ENCODE measurements at regions of chr19 and their contacts with region 1.

Region 1: GRCh38 chr19:2096480-2097329 is at the start of gene IZUMO4:
- DNase-seq: peak; percentile 96
- ATAC-seq: peak; percentile 95
- H3K4me3 ChIP-seq: peak within 1 kb of the TSS; percentile 70
- H3K27ac ChIP-seq: peak within 1 kb of the TSS; percentile 89
- H3K4me1 ChIP-seq: peaks cover 6% of the 10 kb centered on the region
- H3K27me3 ChIP-seq: no peaks in the 10 kb centered on the region
- CTCF ChIP-seq: peak; percentile 43
- POLR2A ChIP-seq: no peak
- RAD21 ChIP-seq: peak; percentile 20; the same call in 1 of the 2 replicates
- total RNA-seq, gene IZUMO4: 0.56 and 0.72 TPM in 2 replicates

Region 2: DNA sequence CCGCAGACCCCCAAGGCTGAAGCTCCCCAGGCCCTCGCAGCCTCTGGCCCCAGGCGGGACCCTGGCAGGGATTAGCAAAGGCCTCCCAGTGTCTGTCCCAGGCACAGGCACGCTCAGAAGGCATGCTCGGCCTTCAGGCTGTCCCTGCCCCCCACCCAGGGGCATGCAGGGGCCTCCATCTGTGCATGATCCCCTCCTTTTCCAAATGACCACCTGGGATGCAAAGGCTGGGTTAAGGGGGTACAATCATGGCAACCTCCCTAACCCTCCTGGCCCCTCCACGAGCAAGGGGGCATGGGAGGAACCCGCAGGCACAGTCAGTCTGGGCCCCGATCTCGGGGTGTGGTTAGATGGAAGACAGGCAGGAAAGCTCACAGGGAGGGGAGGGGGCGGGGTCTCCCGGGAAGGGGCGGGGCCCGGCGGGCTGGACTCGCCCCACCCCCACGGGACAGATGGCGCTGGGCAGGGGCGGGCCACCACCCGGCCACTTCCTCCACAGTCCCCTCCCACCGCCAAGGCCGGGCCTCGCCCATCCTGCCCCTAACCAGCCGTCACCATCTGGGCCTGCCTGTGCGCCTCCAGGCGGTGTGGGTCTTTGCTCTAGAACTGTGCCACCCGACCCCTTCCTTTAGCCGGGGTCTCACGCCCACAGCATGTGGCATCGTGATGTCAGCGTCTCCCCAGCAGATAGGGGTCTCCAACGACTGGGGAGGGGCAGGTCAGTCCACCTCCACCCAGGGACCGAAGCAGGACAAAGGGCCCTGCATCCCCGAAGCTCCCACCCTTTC is 241.5 kb before region 1 on chr19:
- CTCF ChIA-PET with region 1: no interaction called
- POLR2A ChIA-PET with region 1: no interaction called
- dilution Hi-C with region 1: no loop called
- in situ Hi-C with region 1: no loop called
- intact Hi-C with region 1: no loop called
- DNase-seq: peak; percentile 85
- ATAC-seq: peak; percentile 88
- H3K4me3 ChIP-seq: peak overlapping the region; percentile 33
- H3K27ac ChIP-seq: peak overlapping the region; percentile 98
- H3K4me1 ChIP-seq: peaks cover 45% of the 10 kb centered on the region
- H3K27me3 ChIP-seq: no peaks in the 10 kb centered on the region
- CTCF ChIP-seq: no peak
- POLR2A ChIP-seq: 0 out of 2 replicates have a peak, but pooled peaks have one; percentile 35
- RAD21 ChIP-seq: no peak

Region 3: GRCh38 chr19:2016041-2016807 is 80.5 kb before region 1 on chr19:
- CTCF ChIA-PET with region 1: no interaction called
- POLR2A ChIA-PET with region 1: no interaction called
- dilution Hi-C with region 1: no loop called
- in situ Hi-C with region 1: no loop called
- intact Hi-C with region 1: loop called (anchors 1 kb)
- DNase-seq: peak; percentile 81
- ATAC-seq: peak; percentile 83
- H3K4me3 ChIP-seq: peak overlapping the region; percentile 30
- H3K27ac ChIP-seq: no peak overlapping the region
- H3K4me1 ChIP-seq: peaks cover 14% of the 10 kb centered on the region
- H3K27me3 ChIP-seq: no peaks in the 10 kb centered on the region
- CTCF ChIP-seq: no peak
- POLR2A ChIP-seq: no peak
- RAD21 ChIP-seq: no peak

Region 4: DNA sequence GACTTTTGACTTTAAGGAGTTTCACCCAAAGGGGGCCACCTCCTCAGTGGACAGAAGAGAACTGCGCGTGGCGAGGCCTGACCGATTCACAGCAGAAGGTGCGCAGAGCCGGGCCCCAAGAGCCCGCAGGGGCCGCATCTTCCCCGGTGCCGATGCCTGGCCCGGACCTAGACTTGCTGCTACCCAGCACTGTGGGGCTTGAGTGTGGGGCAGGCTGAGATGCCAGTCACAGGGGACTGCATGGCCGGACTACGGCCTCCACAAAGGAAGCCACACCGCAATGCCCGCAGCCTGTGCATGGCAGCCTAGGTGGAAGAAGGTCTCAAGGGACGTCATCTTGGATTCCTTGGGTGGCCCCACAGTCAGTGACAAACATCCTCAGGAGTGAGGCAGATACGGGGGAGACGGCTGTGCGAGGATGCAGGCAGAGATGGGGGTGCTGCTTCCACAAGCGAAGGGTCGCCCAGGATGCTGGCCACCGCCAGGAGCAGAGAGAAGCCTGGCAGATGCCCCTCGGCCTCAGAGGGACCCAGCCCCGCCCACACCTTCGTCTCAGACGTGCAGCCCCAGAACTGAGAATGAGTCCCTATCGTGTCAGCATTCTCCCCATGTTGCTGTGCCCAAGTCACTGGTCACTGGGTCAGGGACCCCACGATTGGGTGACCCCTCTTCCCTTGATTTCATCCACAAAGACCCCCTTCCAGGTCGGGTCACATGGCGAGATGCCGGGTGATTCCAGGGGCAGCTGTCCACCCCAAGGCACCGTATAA is 17.4 kb before region 1 on chr19:
- CTCF ChIA-PET with region 1: no interaction called
- POLR2A ChIA-PET with region 1: interaction called, 15 read pairs
- dilution Hi-C with region 1: no loop called
- in situ Hi-C with region 1: no loop called
- intact Hi-C with region 1: no loop called
- DNase-seq: no peak
- ATAC-seq: no peak
- H3K4me3 ChIP-seq: no peak overlapping the region
- H3K27ac ChIP-seq: no peak overlapping the region
- H3K4me1 ChIP-seq: no peaks in the 10 kb centered on the region
- H3K27me3 ChIP-seq: no peaks in the 10 kb centered on the region
- CTCF ChIP-seq: no peak
- POLR2A ChIP-seq: no peak
- RAD21 ChIP-seq: no peak

Measured in IMR-90 (cell line).